Right ventricle myocardium inferior (tissue), 1 donor: ENCODE measurements at regions of chr11 and their contacts with region 1.

Region 1: DNA sequence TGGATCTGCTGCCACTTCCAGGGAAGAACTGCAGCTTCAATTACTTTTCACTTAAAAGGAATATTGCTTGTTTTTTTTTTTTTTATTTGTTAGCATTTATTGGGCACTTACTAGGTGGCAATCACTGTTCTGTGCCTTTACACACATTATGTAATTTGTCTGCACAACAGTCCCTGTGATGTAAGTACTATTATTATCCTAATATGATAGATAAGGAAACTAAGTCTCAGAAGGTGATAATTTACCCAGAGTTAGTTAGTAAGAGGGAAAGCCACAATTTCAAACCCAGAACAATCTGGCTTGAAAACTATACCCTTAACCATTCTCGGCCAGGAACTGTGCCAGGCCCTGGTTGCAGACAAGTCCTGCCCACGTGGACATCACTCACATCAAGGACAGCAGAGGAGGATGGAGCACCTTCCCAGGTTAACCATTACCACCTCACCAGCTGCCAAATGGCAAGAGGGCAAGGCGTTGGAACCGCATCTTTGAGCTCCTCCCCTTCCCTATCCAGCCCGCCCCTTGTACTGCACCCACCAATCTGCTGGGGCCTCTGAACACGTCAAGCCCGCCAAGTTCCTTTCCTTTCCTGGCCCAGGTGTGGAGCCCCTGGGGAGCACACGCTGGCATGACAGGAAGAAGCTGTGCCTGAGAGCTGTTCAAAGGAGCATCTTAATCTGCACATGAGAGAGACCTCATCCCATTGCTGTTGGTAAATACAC is 78.4 kb downstream of the NAV2 start:
- DNase-seq: no peak
- ATAC-seq: no peak

Region 2: DNA sequence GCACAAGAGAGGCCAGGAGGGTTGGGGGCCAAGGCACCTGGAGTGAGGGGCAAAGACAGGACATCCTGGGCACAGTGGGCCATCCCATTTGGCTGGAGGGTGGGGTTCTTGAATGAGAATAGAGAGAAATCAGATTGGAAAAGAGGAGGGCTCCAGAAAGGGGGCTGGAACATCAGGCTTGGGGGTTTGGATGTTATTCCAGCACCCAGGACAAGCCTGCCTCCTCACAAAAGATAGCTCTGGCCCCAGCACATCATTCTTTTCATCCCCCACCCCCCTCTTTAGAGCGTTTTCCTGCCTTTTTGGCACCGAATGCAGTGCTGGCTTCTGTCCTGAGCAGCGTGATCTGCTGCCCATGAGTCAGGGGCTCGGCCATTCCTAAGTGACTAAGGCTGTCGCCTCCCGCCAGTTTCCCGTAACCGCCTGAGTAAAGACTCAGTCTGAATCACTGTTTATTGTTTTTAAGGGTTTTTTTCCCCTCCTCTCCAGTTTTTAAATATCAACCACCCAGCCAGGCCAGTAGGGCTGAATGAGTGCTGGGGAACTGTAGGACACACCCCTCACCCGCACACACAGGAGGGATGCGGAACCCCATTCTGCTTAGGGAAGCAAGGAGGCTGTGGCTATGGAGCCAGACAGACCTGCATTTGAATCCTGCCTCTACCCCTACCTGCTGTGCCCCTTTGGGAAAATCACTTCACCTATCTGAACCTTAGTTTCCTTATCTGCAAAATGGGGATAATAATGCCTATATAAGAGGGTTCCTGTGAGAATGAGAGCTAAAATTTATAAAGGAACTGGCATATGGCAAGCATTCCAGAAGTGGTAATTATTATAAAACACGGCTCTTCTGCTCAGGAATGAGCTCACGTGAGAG is 110.8 kb before region 1 on chr11:
- intact Hi-C with region 1: no loop called
- DNase-seq: peak; percentile 86
- ATAC-seq: peak; percentile 59

Region 3: DNA sequence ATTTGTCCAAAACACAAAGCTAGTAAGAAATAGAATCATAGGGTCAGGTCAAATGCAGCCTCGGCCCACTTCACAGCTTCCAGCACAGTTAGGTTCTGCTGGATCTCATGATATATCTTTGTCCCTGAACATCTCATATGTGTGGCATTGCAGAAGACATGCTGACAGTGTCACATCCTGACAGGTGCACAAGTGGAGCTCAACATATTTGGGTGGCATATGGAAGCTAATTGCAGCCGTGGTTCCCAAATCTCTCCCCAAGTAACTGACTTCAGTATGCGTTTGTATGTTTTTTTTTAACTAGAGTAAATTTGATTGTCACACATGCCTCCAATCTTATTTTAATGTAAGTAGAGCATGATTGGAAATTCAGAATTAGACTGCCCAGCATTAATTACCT is 44.9 kb before region 1 on chr11:
- intact Hi-C with region 1: no loop called
- DNase-seq: no peak
- ATAC-seq: no peak

Region 4: GRCh38 chr11:19756675-19757475 is 34.1 kb before region 1 on chr11:
- intact Hi-C with region 1: loop called (anchors 5 kb)
- DNase-seq: no peak
- ATAC-seq: peak; percentile 90

Region 5: GRCh38 chr11:19769820-19770219 is 21.2 kb before region 1 on chr11:
- intact Hi-C with region 1: loop called (anchors 2 kb)
- DNase-seq: no peak
- ATAC-seq: no peak

Region 6: DNA sequence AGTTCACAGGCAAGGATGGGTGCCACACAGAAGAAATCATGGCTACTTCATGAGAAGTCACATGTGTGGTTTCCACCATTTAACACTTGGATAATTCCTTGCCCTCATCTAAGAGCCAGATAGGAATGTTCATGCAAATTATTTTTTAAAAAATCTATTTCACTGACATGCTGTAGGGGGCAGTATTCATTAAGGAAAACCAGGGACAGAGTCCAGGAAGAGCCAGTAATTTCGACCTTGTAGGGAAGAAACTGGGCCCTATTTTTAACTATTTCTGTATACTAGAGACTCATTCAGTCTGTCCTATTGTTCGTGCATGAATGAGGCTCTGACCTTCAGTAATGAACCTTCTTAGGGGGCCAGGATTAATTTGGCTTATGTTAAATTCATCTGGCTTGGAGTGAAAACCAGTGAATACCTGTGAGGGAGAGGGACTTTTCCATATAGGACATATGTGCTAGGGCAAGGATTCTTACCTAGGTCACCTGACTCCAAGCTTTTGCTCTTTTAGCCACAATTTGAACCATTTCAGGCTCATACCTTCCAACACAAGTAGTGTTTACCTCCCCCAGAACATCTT is 114.4 kb after region 1 on chr11:
- intact Hi-C with region 1: no loop called
- DNase-seq: no peak
- ATAC-seq: no peak